ENCODE measurements at regions of chr20 and their contacts with region 1.

Region 1: DNA sequence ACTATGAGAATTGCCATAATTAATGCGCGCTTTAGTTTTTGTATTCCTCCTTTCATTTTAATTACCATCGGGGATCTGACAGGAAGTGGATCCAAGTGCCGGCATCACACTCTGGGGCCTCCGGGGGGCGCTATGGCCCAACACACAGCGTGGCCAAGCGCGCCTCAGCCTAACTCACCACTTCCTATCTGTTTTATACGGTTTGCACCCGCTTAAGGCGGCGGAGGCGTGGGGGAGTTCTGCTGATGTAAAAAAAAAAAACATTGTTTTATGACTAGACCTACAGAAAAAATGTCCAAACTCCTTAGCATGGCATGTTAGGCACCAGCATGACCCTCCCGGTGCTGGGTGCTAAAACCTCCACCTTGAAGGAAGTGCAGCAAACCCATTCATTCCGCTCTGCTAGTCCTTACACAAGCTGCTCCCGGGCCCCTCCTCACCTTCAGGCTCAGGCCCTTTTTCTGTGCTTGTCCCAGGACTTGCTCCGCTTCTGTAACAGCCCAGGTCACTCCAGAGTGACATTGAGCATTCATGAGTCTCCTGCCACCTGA is 4.5 kb upstream of the EBF4 start:
- DNase-seq: peak in 8 of 10 donors; percentile 43 to 91 (median 63)

Region 2: DNA sequence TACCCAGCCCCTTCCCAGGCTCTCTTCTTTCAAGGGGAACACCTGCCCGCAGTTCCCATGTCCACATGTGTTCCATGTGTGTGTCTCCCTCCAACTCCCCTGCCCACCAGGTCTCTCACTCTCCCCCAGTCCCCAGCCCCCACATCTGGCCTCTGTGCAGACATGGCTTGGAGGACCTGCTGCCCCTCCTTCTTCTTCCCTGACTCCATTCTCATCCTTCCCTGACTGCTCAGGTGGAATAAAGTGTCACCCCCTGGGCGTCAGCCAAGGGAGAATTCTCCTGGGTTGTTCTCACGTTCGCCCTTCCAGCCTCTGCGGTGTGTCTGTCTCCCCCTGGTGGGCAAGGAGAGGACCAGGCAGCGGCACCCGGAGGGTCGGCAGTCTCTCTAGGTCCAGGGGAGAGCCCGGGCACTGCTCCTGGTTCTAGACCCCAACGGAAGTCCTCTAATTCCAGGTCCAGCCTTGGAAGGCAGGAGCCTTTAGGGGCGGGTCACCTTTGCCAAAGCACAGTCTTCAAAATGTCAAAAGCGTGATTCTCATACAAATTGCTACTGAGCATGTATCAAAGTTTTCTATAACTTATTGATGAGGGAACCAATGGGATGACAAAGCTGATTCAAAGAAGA is 54.9 kb after region 1 on chr20:
- intact Hi-C with region 1: loop called (anchors 5 kb)
- DNase-seq: peak in 4 of 10 donors; percentile 34 to 88 (median 50)

Region 3: DNA sequence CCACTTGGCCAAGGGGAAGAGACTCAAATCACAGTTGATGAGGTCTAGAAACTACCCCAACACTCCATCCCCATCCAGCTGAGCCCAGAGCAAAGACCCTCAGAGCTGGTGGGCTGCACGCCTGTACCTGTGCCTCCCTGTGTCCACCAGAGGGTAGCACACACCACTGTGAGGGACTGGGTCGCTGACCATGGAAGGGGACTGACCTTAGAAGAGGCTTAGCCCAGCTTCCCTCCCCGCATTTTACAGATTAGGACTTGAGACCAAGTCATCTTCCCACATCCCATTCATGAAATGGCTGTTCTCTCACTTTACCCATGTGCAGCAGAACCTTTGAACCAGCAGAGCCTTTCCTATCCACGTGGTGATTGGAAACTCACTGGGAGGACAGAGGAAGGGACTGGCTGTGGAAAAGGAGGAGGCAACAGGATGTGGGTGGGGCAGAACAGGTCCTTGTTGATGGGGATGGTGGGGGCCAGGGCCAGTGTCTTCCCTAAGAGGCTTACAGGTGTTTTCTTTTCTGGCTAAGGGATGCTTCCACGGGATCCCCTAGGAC is 68.0 kb after region 1 on chr20:
- intact Hi-C with region 1: no loop called
- DNase-seq: peak in 1 of 10 donors; percentile 63

Region 4: GRCh38 chr20:2995796-2996195 is 307.7 kb after region 1 on chr20:
- intact Hi-C with region 1: loop called (anchors 5 kb)
- DNase-seq: no peak